Right ventricle myocardium superior (tissue), 1 donor: ENCODE measurements at regions of chr12 and their contacts with region 1.

Region 1: GRCh38 chr12:107884769-107885694 is 110.5 kb downstream of the ASCL4 start:
- DNase-seq: no peak
- ATAC-seq: no peak

Region 2: GRCh38 chr12:107679336-107679735 is 205.7 kb before region 1 on chr12:
- intact Hi-C with region 1: loop called (anchors 5 kb)
- DNase-seq: no peak
- ATAC-seq: no peak

Region 3: DNA sequence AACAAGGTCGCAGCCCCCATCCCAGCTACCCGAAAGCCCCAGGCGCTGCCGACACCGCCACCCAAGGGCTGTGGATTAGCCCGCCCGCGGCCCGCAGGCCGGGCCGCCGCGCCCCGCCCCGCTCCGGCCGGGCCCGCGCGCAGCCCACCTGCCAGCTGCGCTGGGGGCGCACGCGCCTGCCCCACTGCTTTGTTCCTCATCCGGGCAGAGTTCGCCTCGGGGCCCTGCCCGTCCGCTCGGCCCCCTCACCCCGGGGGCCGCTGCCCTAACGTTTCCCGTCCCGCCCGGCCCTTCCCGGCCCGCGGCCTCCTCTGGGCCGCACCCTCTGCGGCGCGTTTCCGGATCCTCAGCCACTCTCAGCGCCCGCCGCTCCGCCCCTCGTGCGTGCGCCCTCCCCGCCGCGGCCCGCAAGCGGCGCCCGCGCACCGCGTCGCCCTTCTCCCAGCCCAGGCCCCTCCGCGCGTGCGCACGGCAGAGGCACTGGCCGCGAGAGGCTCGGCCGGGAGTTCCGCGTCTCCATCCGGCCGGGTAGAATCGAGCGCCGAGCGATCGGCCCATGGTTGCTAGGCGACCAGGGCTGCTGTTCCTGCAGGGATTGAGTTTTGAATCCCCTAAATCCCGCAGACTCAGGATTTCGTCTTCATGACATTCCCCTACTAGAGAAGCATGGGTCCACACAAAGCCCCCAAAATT is 124.1 kb before region 1 on chr12 and contains the start of gene PRDM4:
- intact Hi-C with region 1: loop called (anchors 5 kb)
- DNase-seq: peak; percentile 96
- ATAC-seq: peak; percentile 100
- total RNA-seq, gene PRDM4: 13.3 TPM